ENCODE measurements at regions of chr5 and their contacts with region 1.

Region 1: GRCh38 chr5:13957032-13957645 is 12.7 kb upstream of the DNAH5 start:
- DNase-seq: peak in 1 of 2 experiments; percentile 56
- H3K4me3 ChIP-seq: no peak overlapping the region
- H3K4me3 Mint-ChIP-seq: no peak overlapping the region
- H3K27ac Mint-ChIP-seq: no peak overlapping the region
- H3K4me1 ChIP-seq: peaks cover 10% of the 10 kb centered on the region
- H3K4me1 Mint-ChIP-seq: no peaks in the 10 kb centered on the region
- H3K27me3 ChIP-seq: no peaks in the 10 kb centered on the region
- H3K27me3 Mint-ChIP-seq: peaks cover 4% of the 10 kb centered on the region
- CTCF ChIP-seq: peak; percentile 73 to 84

Region 2: GRCh38 chr5:12292610-12293204 is 1664.4 kb before region 1 on chr5:
- CTCF ChIA-PET with region 1: no interaction called
- POLR2A ChIA-PET with region 1: no interaction called
- intact Hi-C with region 1: loop called (anchors 10 kb)
- DNase-seq: peak in 1 of 2 experiments; percentile 42
- H3K4me3 ChIP-seq: no peak overlapping the region
- H3K4me3 Mint-ChIP-seq: no peak overlapping the region
- H3K27ac Mint-ChIP-seq: no peak overlapping the region
- H3K4me1 ChIP-seq: no peaks in the 10 kb centered on the region
- H3K4me1 Mint-ChIP-seq: no peaks in the 10 kb centered on the region
- H3K27me3 ChIP-seq: no peaks in the 10 kb centered on the region
- H3K27me3 Mint-ChIP-seq: no peaks in the 10 kb centered on the region
- CTCF ChIP-seq: peak in 1 of 2 experiments; percentile 38

Region 3: GRCh38 chr5:12704955-12705354 is 1252.2 kb before region 1 on chr5:
- CTCF ChIA-PET with region 1: no interaction called
- POLR2A ChIA-PET with region 1: no interaction called
- intact Hi-C with region 1: loop called (anchors 5 kb)
- DNase-seq: peak in 1 of 2 experiments; percentile 7
- H3K4me3 ChIP-seq: no peak overlapping the region
- H3K4me3 Mint-ChIP-seq: no peak overlapping the region
- H3K27ac Mint-ChIP-seq: no peak overlapping the region
- H3K4me1 ChIP-seq: no peaks in the 10 kb centered on the region
- H3K4me1 Mint-ChIP-seq: no peaks in the 10 kb centered on the region
- H3K27me3 ChIP-seq: no peaks in the 10 kb centered on the region
- H3K27me3 Mint-ChIP-seq: no peaks in the 10 kb centered on the region
- CTCF ChIP-seq: peak in 1 of 2 experiments; percentile 54

Region 4: DNA sequence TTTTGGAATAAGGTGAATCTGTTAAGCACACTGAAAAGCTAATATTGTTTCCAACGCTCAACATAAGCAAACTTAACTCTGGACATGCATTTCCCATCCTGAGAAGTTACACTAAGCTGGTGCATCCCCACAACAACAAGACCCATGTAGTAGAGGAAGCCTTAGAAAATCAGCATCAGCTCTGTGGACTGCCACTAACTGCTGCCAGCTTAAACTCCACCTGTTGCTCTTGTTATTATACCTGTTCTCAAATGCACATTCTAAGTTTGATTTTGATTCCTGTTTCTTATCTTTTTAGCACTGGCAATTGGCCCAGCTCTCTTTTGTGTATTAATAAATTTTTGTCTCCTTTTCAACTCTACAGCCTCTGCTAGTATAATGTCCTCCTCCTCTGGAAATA is 937.4 kb before region 1 on chr5:
- CTCF ChIA-PET with region 1: no interaction called
- POLR2A ChIA-PET with region 1: no interaction called
- intact Hi-C with region 1: no loop called
- DNase-seq: no peak
- H3K4me3 ChIP-seq: no peak overlapping the region
- H3K4me3 Mint-ChIP-seq: no peak overlapping the region
- H3K27ac Mint-ChIP-seq: no peak overlapping the region
- H3K4me1 ChIP-seq: no peaks in the 10 kb centered on the region
- H3K4me1 Mint-ChIP-seq: no peaks in the 10 kb centered on the region
- H3K27me3 ChIP-seq: no peaks in the 10 kb centered on the region
- H3K27me3 Mint-ChIP-seq: peaks cover 2% of the 10 kb centered on the region
- CTCF ChIP-seq: no peak

Region 5: DNA sequence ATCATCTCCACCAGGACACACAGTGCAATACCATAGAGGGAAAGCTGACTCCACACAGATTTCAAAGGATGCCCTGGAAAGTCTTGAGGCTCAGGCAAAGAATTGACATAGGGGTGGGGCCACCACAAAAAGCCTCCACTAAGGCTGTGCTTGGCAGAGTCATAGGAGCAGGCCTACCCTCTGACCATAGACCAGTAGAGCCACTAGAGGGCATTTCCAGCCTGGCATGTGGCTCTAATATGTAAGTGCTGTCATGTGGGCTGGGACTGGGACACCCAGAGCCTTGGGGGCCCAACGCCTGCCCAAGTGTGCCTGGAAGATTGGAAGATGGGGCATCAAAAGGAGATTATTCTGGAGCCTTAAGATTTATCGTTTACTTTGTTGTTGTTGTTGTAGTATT is 738.6 kb before region 1 on chr5:
- CTCF ChIA-PET with region 1: no interaction called
- POLR2A ChIA-PET with region 1: no interaction called
- intact Hi-C with region 1: loop called (anchors 1 kb)
- DNase-seq: peak in 1 of 2 experiments; percentile 6
- H3K4me3 ChIP-seq: no peak overlapping the region
- H3K4me3 Mint-ChIP-seq: no peak overlapping the region
- H3K27ac Mint-ChIP-seq: no peak overlapping the region
- H3K4me1 ChIP-seq: no peaks in the 10 kb centered on the region
- H3K4me1 Mint-ChIP-seq: no peaks in the 10 kb centered on the region
- H3K27me3 ChIP-seq: no peaks in the 10 kb centered on the region; the same call in 1 of the 2 replicates
- H3K27me3 Mint-ChIP-seq: peaks cover 3% of the 10 kb centered on the region
- CTCF ChIP-seq: peak; percentile 21 to 28

Region 6: DNA sequence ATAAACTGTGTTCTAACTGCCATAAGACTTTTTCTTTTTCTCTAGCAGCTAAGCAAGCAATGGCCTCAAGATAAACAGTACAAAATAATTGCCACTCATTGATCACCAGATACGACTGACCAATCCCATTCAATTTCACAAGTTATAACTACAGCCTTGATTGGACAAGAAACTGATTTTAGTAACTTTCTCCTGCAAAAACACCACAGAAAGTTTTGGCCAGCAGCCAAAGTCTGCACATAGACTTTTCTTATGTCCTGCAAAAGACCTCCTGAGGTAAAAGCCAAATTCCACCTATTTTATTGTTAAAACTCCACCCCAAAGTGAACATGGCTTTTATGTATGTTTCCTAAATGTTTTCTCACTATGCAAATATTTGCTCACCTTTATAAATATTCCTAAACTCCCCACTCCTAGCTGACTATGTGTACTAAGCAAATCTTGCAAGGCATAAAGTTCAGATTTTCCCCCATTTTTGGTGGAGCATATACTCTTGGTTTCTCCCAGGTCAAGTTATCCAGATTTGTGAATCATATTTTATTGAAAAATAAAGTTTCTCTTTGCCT is 458.9 kb before region 1 on chr5:
- CTCF ChIA-PET with region 1: no interaction called
- POLR2A ChIA-PET with region 1: no interaction called
- intact Hi-C with region 1: no loop called
- DNase-seq: no peak
- H3K4me3 ChIP-seq: no peak overlapping the region
- H3K4me3 Mint-ChIP-seq: no peak overlapping the region
- H3K27ac Mint-ChIP-seq: peak overlapping the region; percentile 53
- H3K4me1 ChIP-seq: peaks cover 17% of the 10 kb centered on the region
- H3K4me1 Mint-ChIP-seq: peaks cover 40% of the 10 kb centered on the region
- H3K27me3 ChIP-seq: no peaks in the 10 kb centered on the region
- H3K27me3 Mint-ChIP-seq: no peaks in the 10 kb centered on the region
- CTCF ChIP-seq: no peak

Region 7: DNA sequence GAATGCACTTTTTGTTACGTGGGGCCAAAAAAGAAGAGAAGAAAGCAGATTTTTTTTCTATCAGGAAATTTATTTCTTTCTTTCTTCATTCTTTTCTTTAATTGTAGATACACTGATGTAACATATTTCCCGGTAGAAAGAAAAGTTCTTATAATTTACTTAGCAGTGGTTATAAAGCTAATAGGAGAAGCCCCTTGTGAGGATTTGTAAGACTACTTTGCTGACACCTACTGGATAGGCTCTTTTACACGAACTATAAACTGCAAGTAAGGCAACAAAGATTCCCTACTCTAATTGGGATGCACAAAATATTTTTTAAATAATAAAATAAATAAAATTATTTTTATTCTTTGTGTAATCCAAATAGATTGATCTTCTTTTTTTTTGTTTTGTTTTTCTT is 297.1 kb before region 1 on chr5:
- CTCF ChIA-PET with region 1: no interaction called
- POLR2A ChIA-PET with region 1: no interaction called
- intact Hi-C with region 1: loop called (anchors 10 kb)
- DNase-seq: peak in 1 of 2 experiments; percentile 12
- H3K4me3 ChIP-seq: no peak overlapping the region
- H3K4me3 Mint-ChIP-seq: no peak overlapping the region
- H3K27ac Mint-ChIP-seq: no peak overlapping the region
- H3K4me1 ChIP-seq: peaks cover under 1% of the 10 kb centered on the region; the same call in 1 of the 2 replicates
- H3K4me1 Mint-ChIP-seq: peaks cover 12% of the 10 kb centered on the region
- H3K27me3 ChIP-seq: no peaks in the 10 kb centered on the region
- H3K27me3 Mint-ChIP-seq: no peaks in the 10 kb centered on the region
- CTCF ChIP-seq: peak in 1 of 2 experiments; percentile 30

Region 8: GRCh38 chr5:13831351-13831750 is 125.8 kb before region 1 on chr5:
- CTCF ChIA-PET with region 1: no interaction called
- POLR2A ChIA-PET with region 1: no interaction called
- intact Hi-C with region 1: loop called (anchors 5 kb)
- DNase-seq: no peak
- H3K4me3 ChIP-seq: no peak overlapping the region
- H3K4me3 Mint-ChIP-seq: no peak overlapping the region
- H3K27ac Mint-ChIP-seq: no peak overlapping the region
- H3K4me1 ChIP-seq: no peaks in the 10 kb centered on the region
- H3K4me1 Mint-ChIP-seq: no peaks in the 10 kb centered on the region
- H3K27me3 ChIP-seq: no peaks in the 10 kb centered on the region; the same call in 1 of the 2 replicates
- H3K27me3 Mint-ChIP-seq: peaks cover 12% of the 10 kb centered on the region
- CTCF ChIP-seq: peak in 1 of 2 experiments; percentile 29

Measured in Caco-2 (cell line).